ENCODE measurements at regions of chr3 and their contacts with region 1.

Region 1: DNA sequence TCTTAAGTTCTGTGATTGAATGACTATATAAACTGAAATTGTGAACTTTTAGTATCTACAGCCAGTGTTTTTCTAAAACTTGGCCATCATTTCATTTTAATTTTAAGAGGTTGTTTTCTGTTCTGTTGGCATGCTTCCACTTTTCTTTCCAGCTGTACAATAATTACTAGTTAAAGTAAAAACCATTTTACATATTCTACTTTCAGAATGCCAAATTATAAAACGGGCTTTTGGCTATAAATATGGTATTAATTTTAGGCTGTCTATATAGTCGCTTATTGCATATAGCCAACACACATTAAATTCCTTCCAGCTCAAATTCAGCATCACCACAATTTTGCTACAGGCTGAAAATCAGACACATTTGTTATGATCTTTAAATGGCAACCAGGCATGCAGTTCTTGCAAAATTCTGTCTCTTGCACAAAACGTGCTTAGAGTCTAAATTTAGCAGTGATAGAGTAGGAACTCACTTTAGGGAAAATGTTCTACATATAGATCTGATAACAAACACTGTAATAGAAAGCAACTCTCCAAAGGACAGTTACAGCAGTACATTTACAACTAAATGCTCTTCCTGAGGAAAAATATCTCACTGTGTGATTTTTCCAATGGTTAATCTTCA is 81.1 kb downstream of the BTD start:
- DNase-seq: peak; percentile 35
- H3K4me3 ChIP-seq: no peak overlapping the region
- H3K27ac ChIP-seq: no peak overlapping the region
- H3K4me1 ChIP-seq: peaks cover 26% of the 10 kb centered on the region
- H3K27me3 ChIP-seq: no peaks in the 10 kb centered on the region
- CTCF ChIP-seq: no peak
- POLR2A ChIP-seq: no peak

Region 2: GRCh38 chr3:15753056-15753710 is 70.5 kb after region 1 on chr3:
- CTCF ChIA-PET with region 1: no interaction called
- POLR2A ChIA-PET with region 1: no interaction called
- dilution Hi-C with region 1: no loop called
- intact Hi-C with region 1: loop called (anchors 5 kb)
- DNase-seq: no peak
- H3K4me3 ChIP-seq: no peak overlapping the region
- H3K27ac ChIP-seq: no peak overlapping the region
- H3K4me1 ChIP-seq: peaks cover 2% of the 10 kb centered on the region
- H3K27me3 ChIP-seq: no peaks in the 10 kb centered on the region
- CTCF ChIP-seq: no peak
- POLR2A ChIP-seq: no peak

Measured in endothelial cell of umbilical vein (primary cell).